RWPE1 (cell line): ENCODE measurements at regions of chr11 and their contacts with region 1.

Region 1: DNA sequence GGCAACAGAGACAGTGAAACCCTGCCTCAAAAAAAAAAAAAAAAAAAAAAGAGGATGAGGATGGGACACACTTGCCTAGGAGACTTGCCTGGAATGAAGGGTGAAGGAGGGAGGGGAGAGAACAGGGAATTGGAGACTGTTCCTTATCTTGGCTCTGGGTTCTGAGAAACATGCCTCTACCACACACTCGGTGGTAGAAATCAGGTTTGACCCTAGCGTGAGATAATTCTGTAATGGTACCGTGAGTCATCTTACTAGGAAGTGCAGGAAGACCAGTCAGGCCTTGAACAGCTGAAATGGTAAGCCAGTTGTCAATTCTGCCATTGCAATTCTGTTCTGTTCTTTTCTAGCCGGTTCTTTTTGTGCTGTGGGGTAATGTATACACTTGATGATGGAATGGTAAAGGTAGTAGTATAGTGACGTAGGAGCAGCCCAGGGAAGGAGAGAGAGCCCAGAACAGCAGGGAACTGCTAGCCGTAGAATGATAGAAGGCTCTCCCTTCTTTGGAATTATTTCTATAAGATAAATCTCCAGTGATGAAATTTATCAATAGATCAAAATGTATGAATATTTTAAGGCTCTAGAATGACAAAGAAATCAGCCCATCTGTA is 3.9 kb upstream of the AMBRA1 start:
- DNase-seq: no peak
- H3K27ac ChIP-seq: no peak overlapping the region
- CTCF ChIP-seq: no peak

Region 2: GRCh38 chr11:46160100-46160499 is 437.6 kb before region 1 on chr11:
- CTCF ChIA-PET with region 1: no interaction called
- POLR2A ChIA-PET with region 1: no interaction called
- DNase-seq: no peak
- H3K27ac ChIP-seq: peak overlapping the region; percentile 73
- CTCF ChIP-seq: no peak

Region 3: DNA sequence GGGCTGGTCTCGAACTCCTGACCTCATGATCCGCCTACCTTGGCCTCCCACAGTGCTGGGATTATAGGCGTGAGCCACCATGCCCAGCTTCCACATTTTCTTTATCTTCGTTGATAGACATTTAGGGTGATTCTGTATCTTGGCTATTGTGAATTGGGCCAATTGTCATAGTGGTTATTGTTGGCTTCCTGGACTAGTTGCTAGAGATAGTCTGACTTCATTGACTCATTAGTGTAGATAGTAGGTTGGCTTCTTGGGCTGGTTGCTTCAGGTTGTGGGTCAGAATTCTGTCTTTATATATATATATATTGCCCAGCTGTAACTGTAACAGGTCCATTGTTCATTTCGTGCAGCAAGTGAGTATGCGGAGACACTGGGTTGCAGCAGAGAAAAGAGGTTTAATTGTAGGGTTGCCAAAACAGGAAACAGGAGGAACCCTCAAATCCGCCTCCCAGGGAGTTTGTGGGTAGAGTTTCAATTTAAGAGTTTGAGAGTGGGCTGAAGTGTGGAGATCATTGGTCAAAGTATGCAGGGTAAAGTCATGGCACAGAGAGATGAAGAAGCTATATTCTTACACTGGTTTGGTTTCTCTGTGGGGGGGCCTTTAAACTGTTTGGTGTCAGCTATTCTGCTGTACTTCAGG is 41.6 kb after region 1 on chr11:
- CTCF ChIA-PET with region 1: no interaction called
- POLR2A ChIA-PET with region 1: no interaction called
- DNase-seq: no peak
- H3K27ac ChIP-seq: no peak overlapping the region
- CTCF ChIP-seq: no peak

Region 4: GRCh38 chr11:46865340-46865739 is 267.6 kb after region 1 on chr11:
- CTCF ChIA-PET with region 1: no interaction called
- POLR2A ChIA-PET with region 1: interaction called, 10 read pairs
- DNase-seq: no peak
- H3K27ac ChIP-seq: no peak overlapping the region
- CTCF ChIP-seq: no peak